ENCODE measurements at regions of chr15 and their contacts with region 1.

Region 1: GRCh38 chr15:31128919-31129768 is 27.6 kb upstream of the TRPM1 start:
- DNase-seq: no peak
- ATAC-seq: peak; percentile 98
- H3K4me3 ChIP-seq: no peak overlapping the region
- H3K27ac ChIP-seq: no peak overlapping the region
- H3K4me1 ChIP-seq: no peaks in the 10 kb centered on the region
- H3K27me3 ChIP-seq: no peaks in the 10 kb centered on the region; a peak in 1 of 4 replicates
- CTCF ChIP-seq: peak; percentile 81 to 98 (median 96)
- EP300 ChIP-seq: no peak
- POLR2A ChIP-seq: no peak
- RAD21 ChIP-seq: peak; percentile 96

Region 2: DNA sequence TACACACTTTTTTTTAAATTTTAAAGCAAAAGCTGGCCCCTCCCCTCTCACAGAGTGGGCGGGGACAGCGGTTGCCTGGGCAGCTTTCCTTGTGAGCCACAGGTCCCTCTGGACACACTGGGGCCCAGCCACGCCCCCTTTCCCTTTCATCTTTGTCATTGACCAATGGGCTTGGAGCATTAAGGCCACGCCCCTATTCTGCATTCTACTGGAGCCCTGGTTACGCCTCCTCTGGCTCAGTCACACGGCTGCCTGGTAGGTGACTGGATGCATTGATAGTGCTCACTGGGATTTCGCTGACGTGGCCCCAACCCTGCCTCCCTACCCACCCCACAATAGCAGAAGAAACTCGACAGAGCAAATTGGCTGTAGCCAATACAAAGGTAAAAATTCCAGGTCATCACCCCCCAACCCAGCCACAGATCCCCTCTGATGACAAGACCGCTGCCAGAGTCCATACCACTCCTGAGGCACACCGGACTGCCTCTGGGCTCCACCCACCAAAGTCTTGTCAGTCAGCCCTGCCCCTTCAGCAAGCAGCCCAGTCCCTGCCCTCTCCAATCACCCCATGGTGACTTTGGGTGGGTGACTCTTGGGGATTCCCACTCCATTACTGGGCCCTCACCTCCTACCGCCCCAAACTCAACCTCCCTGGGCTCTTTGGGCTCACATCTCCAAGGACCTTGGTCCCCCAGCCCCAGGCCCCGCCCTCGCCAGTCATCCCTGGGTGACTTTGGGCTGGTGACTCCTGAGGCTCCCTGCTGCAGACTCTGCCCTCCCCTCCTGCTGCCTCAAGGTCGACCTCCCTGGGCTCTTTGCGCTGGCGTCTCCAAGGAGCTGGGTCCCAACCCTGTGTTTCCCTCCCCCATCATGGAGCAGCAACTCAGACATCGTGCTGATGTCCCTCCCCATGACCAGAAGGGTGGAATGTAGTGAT is 337.6 kb before region 1 on chr15:
- CTCF ChIA-PET with region 1: interaction called, 3 read pairs
- POLR2A ChIA-PET with region 1: no interaction called
- RAD21 ChIA-PET with region 1: no interaction called
- SMC1A ChIA-PET with region 1: no interaction called
- in situ Hi-C with region 1: no loop called
- intact Hi-C with region 1: loop called (anchors 5 kb)
- DNase-seq: no peak
- ATAC-seq: no peak
- H3K4me3 ChIP-seq: no peak overlapping the region
- H3K27ac ChIP-seq: no peak overlapping the region
- H3K4me1 ChIP-seq: no peaks in the 10 kb centered on the region
- H3K27me3 ChIP-seq: no peaks in the 10 kb centered on the region
- CTCF ChIP-seq: no peak
- EP300 ChIP-seq: no peak
- POLR2A ChIP-seq: no peak
- RAD21 ChIP-seq: no peak

Region 3: DNA sequence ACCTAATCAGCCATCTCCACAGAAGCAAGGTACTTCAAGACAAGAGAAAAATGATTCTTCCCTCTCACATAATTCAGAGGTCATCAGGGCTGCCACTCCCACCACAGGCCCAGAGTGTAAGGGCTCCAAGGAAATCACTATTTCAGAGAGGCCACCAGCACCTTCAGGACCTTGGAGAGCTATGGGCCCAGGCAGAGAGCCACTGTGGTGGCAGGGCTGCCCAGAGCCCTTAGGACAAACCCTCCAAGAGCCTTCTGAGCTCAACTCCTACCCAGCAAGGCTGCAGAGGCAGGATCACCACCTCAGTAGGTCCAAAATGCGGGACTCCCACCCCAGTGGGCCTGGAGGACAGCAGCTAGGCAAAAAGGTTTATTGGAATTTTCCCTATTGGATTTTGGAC is 243.3 kb before region 1 on chr15:
- CTCF ChIA-PET with region 1: interaction called, 3 read pairs
- POLR2A ChIA-PET with region 1: no interaction called
- RAD21 ChIA-PET with region 1: no interaction called
- SMC1A ChIA-PET with region 1: no interaction called
- in situ Hi-C with region 1: no loop called
- intact Hi-C with region 1: loop called (anchors 5 kb)
- DNase-seq: no peak
- ATAC-seq: 0 out of 3 replicates have a peak, but pooled peaks have one; percentile 30
- H3K4me3 ChIP-seq: no peak overlapping the region
- H3K27ac ChIP-seq: no peak overlapping the region
- H3K4me1 ChIP-seq: no peaks in the 10 kb centered on the region
- H3K27me3 ChIP-seq: no peaks in the 10 kb centered on the region
- CTCF ChIP-seq: no peak
- EP300 ChIP-seq: no peak
- POLR2A ChIP-seq: no peak
- RAD21 ChIP-seq: no peak

Region 4: DNA sequence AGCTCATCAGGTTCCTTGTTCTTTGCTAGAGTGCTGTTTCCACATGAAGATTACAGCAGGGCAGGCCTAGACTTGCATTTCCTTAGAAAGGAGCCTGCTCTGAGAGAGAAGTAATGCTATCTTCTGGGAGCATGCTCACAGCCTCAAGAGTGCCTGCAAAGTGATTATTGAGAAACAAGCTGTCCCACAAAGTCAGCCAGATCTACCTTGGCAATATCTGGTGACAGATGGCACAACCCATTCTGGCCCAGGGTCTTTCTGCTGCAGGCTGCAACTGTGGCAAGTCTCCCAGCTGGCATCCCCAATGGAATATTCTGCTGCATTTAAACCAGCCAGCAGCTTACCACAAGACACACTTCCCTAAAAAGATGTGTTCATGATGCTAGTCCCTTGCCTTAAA is 167.1 kb before region 1 on chr15:
- CTCF ChIA-PET with region 1: interaction called, 12 read pairs
- POLR2A ChIA-PET with region 1: no interaction called
- RAD21 ChIA-PET with region 1: no interaction called
- SMC1A ChIA-PET with region 1: no interaction called
- in situ Hi-C with region 1: no loop called
- intact Hi-C with region 1: no loop called
- DNase-seq: no peak
- ATAC-seq: no peak
- H3K4me3 ChIP-seq: no peak overlapping the region
- H3K27ac ChIP-seq: no peak overlapping the region
- H3K4me1 ChIP-seq: peaks cover 4% of the 10 kb centered on the region; the same call in 1 of the 2 replicates
- H3K27me3 ChIP-seq: no peaks in the 10 kb centered on the region
- CTCF ChIP-seq: no peak
- EP300 ChIP-seq: no peak
- POLR2A ChIP-seq: no peak
- RAD21 ChIP-seq: no peak

Region 5: GRCh38 chr15:31004220-31004733 is 124.9 kb before region 1 on chr15:
- CTCF ChIA-PET with region 1: interaction called, 12 read pairs
- POLR2A ChIA-PET with region 1: no interaction called
- RAD21 ChIA-PET with region 1: no interaction called
- SMC1A ChIA-PET with region 1: no interaction called
- in situ Hi-C with region 1: no loop called
- intact Hi-C with region 1: no loop called
- DNase-seq: peak; percentile 99
- ATAC-seq: peak; percentile 95
- H3K4me3 ChIP-seq: 0 out of 2 replicates have a peak overlapping the region, but pooled peaks have one; percentile 14
- H3K27ac ChIP-seq: peak overlapping the region; percentile 29
- H3K4me1 ChIP-seq: peaks cover 19% of the 10 kb centered on the region
- H3K27me3 ChIP-seq: no peaks in the 10 kb centered on the region
- CTCF ChIP-seq: no peak
- EP300 ChIP-seq: peak; percentile 74 to 92; a peak in 3 of 4 replicates
- POLR2A ChIP-seq: peak; percentile 52; the same call in 1 of the 2 replicates
- RAD21 ChIP-seq: 0 out of 2 replicates have a peak, but pooled peaks have one; percentile 15

Region 6: GRCh38 chr15:31145271-31145911 is 16.2 kb after region 1 on chr15:
- CTCF ChIA-PET with region 1: interaction called, 12 read pairs
- POLR2A ChIA-PET with region 1: no interaction called
- RAD21 ChIA-PET with region 1: interaction called, 4 read pairs
- SMC1A ChIA-PET with region 1: no interaction called
- in situ Hi-C with region 1: no loop called
- intact Hi-C with region 1: no loop called
- DNase-seq: no peak
- ATAC-seq: no peak
- H3K4me3 ChIP-seq: no peak overlapping the region
- H3K27ac ChIP-seq: no peak overlapping the region
- H3K4me1 ChIP-seq: no peaks in the 10 kb centered on the region
- H3K27me3 ChIP-seq: no peaks in the 10 kb centered on the region
- CTCF ChIP-seq: 0 out of 6 replicates have a peak, but pooled peaks of 1 of the 3 experiments have one; percentile 5
- EP300 ChIP-seq: no peak
- POLR2A ChIP-seq: no peak
- RAD21 ChIP-seq: no peak

Region 7: DNA sequence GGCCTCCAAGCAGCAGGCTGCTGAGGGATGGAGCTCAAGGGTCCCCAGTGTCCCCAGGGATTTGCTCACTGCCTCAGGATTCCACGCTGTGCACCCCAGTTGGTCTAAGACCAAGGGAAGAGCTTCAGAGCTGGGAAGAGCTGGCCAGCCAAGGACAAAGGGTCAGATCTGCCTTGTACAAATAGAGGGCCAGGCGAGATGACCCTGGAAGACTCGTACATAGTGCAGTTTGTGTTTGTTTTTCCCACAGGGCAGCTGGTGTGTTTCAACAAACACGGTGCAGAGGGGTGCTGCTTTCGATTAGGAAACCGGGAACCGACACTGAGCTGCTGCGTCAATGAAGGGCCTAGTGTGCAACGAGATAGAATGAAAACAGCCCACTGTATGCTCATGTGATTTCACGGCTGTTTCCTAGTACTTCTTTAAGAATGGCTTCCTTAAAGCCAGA is 28.5 kb after region 1 on chr15:
- CTCF ChIA-PET with region 1: no interaction called
- POLR2A ChIA-PET with region 1: no interaction called
- RAD21 ChIA-PET with region 1: no interaction called
- SMC1A ChIA-PET with region 1: no interaction called
- in situ Hi-C with region 1: no loop called
- intact Hi-C with region 1: no loop called
- DNase-seq: no peak
- ATAC-seq: no peak
- H3K4me3 ChIP-seq: no peak overlapping the region
- H3K27ac ChIP-seq: no peak overlapping the region
- H3K4me1 ChIP-seq: no peaks in the 10 kb centered on the region
- H3K27me3 ChIP-seq: no peaks in the 10 kb centered on the region
- CTCF ChIP-seq: no peak
- EP300 ChIP-seq: no peak
- POLR2A ChIP-seq: no peak
- RAD21 ChIP-seq: no peak

Region 8: GRCh38 chr15:31338318-31338878 is 209.3 kb after region 1 on chr15:
- CTCF ChIA-PET with region 1: no interaction called
- POLR2A ChIA-PET with region 1: no interaction called
- RAD21 ChIA-PET with region 1: no interaction called
- SMC1A ChIA-PET with region 1: no interaction called
- in situ Hi-C with region 1: no loop called
- intact Hi-C with region 1: no loop called
- DNase-seq: no peak
- ATAC-seq: peak; percentile 79
- H3K4me3 ChIP-seq: peak overlapping the region; percentile 33; the same call in 1 of the 2 replicates
- H3K27ac ChIP-seq: peak overlapping the region; percentile 83
- H3K4me1 ChIP-seq: peaks cover 88% of the 10 kb centered on the region
- H3K27me3 ChIP-seq: no peaks in the 10 kb centered on the region
- CTCF ChIP-seq: no peak
- EP300 ChIP-seq: no peak
- POLR2A ChIP-seq: no peak; the same call in 1 of the 2 replicates
- RAD21 ChIP-seq: no peak

Measured in GM12878 (cell line).